Endothelial cell of umbilical vein (primary cell): ENCODE measurements at regions of chr13 and their contacts with region 1.

Region 1: GRCh38 chr13:59771272-59771671 is 392.5 kb downstream of the DIAPH3 start:
- DNase-seq: peak; percentile 25
- H3K4me3 ChIP-seq: no peak overlapping the region
- H3K27ac ChIP-seq: no peak overlapping the region
- H3K4me1 ChIP-seq: no peaks in the 10 kb centered on the region
- H3K27me3 ChIP-seq: no peaks in the 10 kb centered on the region
- CTCF ChIP-seq: peak; percentile 39 to 46
- POLR2A ChIP-seq: no peak

Region 2: DNA sequence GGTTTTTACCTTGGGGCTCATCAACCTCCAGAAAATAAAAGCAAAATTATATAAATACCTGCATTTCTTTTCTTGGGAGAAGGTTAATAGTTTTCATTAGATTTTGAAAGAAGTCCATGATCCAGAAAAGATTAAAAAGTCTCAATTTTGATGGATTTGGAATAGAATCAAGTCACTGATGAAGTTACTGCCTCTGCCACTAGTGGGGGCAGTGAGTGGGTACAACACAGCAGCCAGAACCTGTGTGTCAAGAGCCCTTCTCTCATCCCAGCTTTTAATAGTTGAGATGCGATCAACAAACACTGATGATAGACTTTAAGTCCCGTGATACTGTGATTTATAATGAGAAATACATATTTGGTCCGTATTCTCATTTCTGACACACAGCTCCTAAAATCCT is 294.3 kb before region 1 on chr13:
- CTCF ChIA-PET with region 1: no interaction called
- POLR2A ChIA-PET with region 1: no interaction called
- dilution Hi-C with region 1: no loop called
- intact Hi-C with region 1: loop called (anchors 5 kb)
- DNase-seq: peak; percentile 41
- H3K4me3 ChIP-seq: no peak overlapping the region
- H3K27ac ChIP-seq: no peak overlapping the region
- H3K4me1 ChIP-seq: peaks cover 44% of the 10 kb centered on the region
- H3K27me3 ChIP-seq: no peaks in the 10 kb centered on the region
- CTCF ChIP-seq: peak; percentile 51 to 59
- POLR2A ChIP-seq: no peak

Region 3: GRCh38 chr13:59684105-59684504 is 87.2 kb before region 1 on chr13:
- CTCF ChIA-PET with region 1: interaction called, 65 read pairs
- POLR2A ChIA-PET with region 1: no interaction called
- dilution Hi-C with region 1: no loop called
- intact Hi-C with region 1: loop called (anchors 1 kb)
- DNase-seq: no peak
- H3K4me3 ChIP-seq: no peak overlapping the region
- H3K27ac ChIP-seq: no peak overlapping the region
- H3K4me1 ChIP-seq: no peaks in the 10 kb centered on the region
- H3K27me3 ChIP-seq: no peaks in the 10 kb centered on the region
- CTCF ChIP-seq: no peak
- POLR2A ChIP-seq: no peak

Region 4: GRCh38 chr13:59755632-59756290 is 15.5 kb before region 1 on chr13:
- CTCF ChIA-PET with region 1: interaction called, 16 read pairs
- POLR2A ChIA-PET with region 1: no interaction called
- dilution Hi-C with region 1: no loop called
- intact Hi-C with region 1: no loop called
- DNase-seq: peak; percentile 38
- H3K4me3 ChIP-seq: no peak overlapping the region
- H3K27ac ChIP-seq: no peak overlapping the region
- H3K4me1 ChIP-seq: peaks cover 11% of the 10 kb centered on the region
- H3K27me3 ChIP-seq: no peaks in the 10 kb centered on the region
- CTCF ChIP-seq: no peak
- POLR2A ChIP-seq: no peak

Region 5: GRCh38 chr13:59906413-59907049 is 135.3 kb after region 1 on chr13:
- CTCF ChIA-PET with region 1: interaction called, 24 read pairs
- POLR2A ChIA-PET with region 1: no interaction called
- dilution Hi-C with region 1: no loop called
- intact Hi-C with region 1: loop called (anchors 2 kb)
- DNase-seq: peak; percentile 47
- H3K4me3 ChIP-seq: no peak overlapping the region
- H3K27ac ChIP-seq: no peak overlapping the region
- H3K4me1 ChIP-seq: peaks cover 2% of the 10 kb centered on the region
- H3K27me3 ChIP-seq: no peaks in the 10 kb centered on the region
- CTCF ChIP-seq: peak; percentile 24 to 37
- POLR2A ChIP-seq: no peak

Region 6: DNA sequence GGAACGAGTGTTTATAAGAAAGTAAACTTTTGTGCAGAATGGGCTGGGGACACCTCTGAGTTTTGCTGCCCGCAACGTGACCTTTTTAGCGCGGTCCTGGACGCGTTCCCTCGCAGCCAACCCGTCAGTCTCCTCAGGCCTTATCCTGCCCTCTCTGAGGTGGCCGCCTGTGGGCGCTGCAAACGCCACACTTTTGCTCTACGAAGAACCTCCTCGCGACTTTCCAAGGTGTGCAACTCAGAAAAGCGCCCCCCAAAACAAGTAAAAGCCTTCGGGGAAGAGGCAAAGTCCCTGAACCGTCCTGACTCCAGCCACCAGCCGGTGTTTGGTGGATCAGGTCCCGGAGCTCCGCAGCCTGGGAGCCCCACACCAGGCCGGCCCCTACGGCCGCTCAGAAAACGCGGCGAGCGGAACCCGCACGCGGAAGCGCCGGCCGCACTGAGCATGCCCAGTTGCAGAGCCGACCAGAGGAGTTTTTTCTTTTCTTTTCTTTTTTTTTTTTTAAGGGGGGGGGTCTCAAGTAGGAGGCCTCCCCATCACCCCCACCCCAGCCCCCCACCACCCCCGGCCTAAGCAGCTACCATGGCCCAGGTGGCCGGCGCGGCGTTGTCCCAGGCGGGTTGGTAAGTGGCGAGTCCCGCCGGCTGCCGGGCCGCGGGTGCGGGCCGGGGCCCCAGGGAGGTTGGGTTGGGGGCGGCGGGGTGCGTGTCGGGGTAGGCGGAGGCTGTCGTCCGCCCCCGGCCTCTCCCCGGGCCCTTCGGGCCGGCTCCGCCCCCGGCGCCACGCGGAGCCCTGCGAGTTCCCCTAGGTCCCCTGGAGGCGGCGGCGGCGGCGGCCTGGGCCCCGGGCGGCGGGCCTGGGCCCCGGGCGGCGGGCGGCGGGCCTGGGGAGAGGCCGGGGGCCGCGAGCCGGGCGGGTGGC is 625.8 kb after region 1 on chr13 and contains the start of gene TDRD3:
- CTCF ChIA-PET with region 1: no interaction called
- POLR2A ChIA-PET with region 1: no interaction called
- dilution Hi-C with region 1: no loop called
- intact Hi-C with region 1: loop called (anchors 10 kb)
- DNase-seq: peak; percentile 90
- H3K4me3 ChIP-seq: peak within 1 kb of the TSS; percentile 76 to 97 (median 94)
- H3K27ac ChIP-seq: peak within 1 kb of the TSS; percentile 93
- H3K4me1 ChIP-seq: peaks cover 23% of the 10 kb centered on the region
- H3K27me3 ChIP-seq: no peaks in the 10 kb centered on the region
- CTCF ChIP-seq: peak; percentile 86 to 94
- POLR2A ChIP-seq: peak; percentile 70
- total RNA-seq, gene TDRD3: 16.3 and 18.5 TPM in 2 replicates